Activated naive CD4-positive, alpha-beta T cell treated with anti-CD3 and anti-CD28 coated beads, Interleukin-2, amount 10 ng/mL, durations not matched to agents 7 days and 5 days (primary cell): ENCODE measurements at regions of chr6 and their contacts with region 1.

Region 1: GRCh38 chr6:137866914-137867684 is at the start of gene TNFAIP3:
- DNase-seq: peak; percentile 95
- H3K4me3 Mint-ChIP-seq: peak within 1 kb of the TSS; percentile 93
- H3K27ac Mint-ChIP-seq: peak within 1 kb of the TSS; percentile 96
- H3K4me1 Mint-ChIP-seq: peaks cover 55% of the 10 kb centered on the region
- H3K27me3 Mint-ChIP-seq: no peaks in the 10 kb centered on the region

Region 2: DNA sequence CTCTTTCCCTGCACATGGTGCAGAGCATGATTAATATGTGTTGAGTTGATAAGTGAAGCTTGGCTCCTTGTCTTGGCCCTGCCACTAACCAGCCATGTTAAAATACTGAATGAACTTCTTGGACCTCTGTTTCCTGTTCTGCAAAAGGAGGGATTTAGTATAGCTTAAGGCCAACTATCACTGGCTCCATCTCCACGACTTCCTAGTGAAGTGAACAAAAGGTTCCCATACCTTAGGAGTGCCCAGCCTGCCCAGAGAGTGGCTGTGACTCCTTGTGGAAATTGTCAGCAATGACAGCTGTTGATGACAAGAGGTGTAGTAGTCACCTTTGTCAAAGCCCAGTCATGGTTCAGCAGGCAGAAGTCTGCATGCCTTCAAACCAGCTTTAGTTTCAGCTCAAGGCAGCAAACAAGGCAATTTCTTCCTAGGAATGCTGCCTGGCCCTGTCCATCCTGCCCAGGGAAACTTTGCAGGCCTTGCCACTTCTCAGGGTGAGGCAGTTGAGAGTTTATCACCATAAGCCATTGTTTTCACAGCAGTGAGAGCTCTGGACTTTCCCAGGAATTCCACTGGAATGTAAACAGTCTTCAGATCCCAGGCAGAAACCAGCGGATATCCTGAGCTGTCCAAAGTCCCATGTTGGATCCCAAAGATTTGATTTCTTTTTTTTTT is 169.7 kb before region 1 on chr6:
- CTCF ChIA-PET with region 1: interaction called, 10 read pairs
- DNase-seq: no peak
- H3K4me3 Mint-ChIP-seq: no peak overlapping the region
- H3K27ac Mint-ChIP-seq: no peak overlapping the region
- H3K4me1 Mint-ChIP-seq: peaks cover 39% of the 10 kb centered on the region
- H3K27me3 Mint-ChIP-seq: peaks cover 15% of the 10 kb centered on the region

Region 3: DNA sequence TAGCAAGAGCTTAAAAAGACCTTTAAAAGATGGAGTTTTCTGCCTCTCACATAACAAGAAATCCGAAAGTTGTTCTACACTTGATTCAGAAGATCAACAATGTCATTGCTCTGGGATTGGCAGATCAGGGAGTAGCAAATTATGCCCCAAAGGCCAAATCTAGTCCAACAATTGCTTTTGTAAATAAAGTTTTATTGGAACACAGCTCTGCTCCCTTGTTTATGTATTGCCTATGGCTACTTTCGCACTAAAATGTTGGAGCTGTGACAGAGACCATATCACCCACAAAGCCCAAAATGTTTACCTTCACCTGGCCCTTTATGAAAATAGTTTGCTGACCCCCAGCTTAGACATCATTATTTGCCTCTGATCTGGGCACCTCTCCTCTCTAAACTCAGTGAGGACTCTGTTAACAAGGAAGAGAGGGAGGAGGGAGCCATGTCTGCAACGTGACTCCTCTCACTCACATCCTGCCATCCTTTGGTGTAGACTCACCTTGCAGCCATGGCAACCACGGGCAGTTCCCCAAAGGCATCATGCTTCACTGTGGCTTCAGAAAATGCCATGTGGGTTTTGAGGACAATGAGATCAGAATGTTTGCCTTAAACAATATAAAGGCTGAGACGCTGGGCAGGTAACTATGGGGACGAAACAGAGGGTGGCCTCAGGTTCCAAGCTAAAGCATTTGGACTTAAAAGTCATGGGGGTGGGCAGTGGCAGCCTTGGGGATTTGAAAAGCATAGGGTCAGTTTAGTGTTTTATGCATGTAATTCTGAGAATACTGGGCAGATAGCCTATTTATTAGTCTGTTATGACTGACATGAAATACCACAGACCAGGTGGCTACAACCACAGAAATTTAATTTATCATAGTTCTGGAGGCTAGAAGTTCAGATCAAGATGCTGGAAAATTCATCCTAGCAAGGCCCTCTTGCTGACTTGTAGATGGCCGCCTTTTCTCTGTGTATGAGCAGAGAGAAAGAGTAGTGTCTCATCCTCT is 149.7 kb before region 1 on chr6:
- CTCF ChIA-PET with region 1: interaction called, 71 read pairs
- DNase-seq: peak; percentile 84
- H3K4me3 Mint-ChIP-seq: no peak overlapping the region
- H3K27ac Mint-ChIP-seq: peak overlapping the region; percentile 78
- H3K4me1 Mint-ChIP-seq: peaks cover 55% of the 10 kb centered on the region
- H3K27me3 Mint-ChIP-seq: no peaks in the 10 kb centered on the region

Region 4: DNA sequence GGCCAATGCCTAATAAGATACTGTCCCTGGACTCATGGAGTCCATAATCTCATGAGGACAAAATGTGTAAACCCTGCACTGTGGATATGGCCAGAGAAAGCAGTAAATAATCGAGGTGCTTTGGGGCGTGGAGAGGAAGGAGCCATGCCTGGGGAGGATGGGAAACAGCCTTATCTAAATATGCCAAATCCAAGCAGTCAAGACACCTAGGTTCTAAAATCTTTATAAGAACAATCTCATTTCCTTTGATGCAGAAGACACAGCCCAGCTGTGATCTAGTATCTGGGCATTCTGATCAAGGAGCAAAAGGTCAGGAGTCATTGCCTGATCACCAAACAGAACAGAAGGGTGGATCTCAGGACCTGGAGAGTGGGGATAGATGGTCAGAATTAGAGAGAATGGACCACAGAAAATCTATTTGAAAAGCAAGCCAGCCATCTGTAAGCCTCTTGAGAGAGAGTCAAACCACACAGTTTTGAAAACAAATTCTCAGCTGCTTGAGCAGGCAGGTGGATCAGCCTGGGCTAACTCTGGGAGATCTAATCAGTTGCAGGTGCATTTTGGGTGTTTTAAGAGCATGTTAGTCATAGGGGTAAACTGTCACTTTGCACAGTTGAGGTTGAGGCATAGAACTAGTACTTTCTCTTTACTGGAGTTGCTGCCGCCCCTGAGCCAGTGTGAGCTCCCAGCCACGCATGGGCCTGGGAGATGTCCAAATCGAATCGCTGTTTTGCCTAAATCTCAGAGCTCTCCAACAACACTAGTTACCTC is 130.9 kb before region 1 on chr6:
- CTCF ChIA-PET with region 1: no interaction called
- DNase-seq: peak; percentile 29
- H3K4me3 Mint-ChIP-seq: no peak overlapping the region
- H3K27ac Mint-ChIP-seq: peak overlapping the region; percentile 71
- H3K4me1 Mint-ChIP-seq: peaks cover 13% of the 10 kb centered on the region
- H3K27me3 Mint-ChIP-seq: peaks cover 39% of the 10 kb centered on the region

Region 5: DNA sequence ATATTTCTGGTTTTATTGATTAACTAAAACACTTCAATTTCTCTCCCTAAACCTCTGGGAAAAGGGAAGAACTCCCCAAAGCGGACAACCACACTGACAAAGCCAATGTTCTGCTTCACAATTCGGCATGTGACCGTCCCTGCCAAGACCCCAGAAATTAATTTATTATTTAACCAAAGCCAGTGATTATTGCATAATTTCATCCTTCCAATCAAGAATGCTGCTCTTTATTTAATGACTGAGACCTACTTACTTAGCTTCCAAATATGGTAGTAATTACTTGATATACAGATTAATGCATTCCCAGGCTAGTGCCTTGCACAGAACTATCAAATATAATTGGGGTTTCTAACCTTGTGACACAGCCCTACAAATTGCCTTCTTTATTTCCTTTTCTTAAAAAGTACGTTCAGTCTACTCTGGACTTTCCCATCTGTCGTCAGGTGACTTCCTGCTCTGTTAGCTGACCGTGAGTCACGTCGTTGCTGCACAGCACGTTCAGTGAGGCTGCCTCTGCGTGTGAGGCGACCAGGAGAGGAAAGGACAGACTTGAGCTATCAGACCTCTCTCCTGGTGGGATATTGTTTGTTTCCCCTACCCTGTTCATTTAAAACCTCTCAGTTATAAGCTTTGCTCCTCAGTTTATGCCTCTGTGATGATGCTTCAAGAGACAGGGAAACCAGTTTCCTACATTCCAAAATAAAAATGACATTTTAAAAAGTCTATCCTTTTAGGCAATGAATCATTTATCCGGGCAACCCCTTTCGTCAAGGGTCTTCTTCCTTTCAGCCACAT is 55.8 kb before region 1 on chr6:
- CTCF ChIA-PET with region 1: interaction called, 11 read pairs
- DNase-seq: peak; percentile 78
- H3K4me3 Mint-ChIP-seq: peak overlapping the region; percentile 14
- H3K27ac Mint-ChIP-seq: peak overlapping the region; percentile 61
- H3K4me1 Mint-ChIP-seq: peaks cover 40% of the 10 kb centered on the region
- H3K27me3 Mint-ChIP-seq: no peaks in the 10 kb centered on the region

Region 6: GRCh38 chr6:137878486-137879285 is 11.6 kb after region 1 on chr6:
- CTCF ChIA-PET with region 1: interaction called, 87 read pairs
- DNase-seq: no peak
- H3K4me3 Mint-ChIP-seq: no peak overlapping the region
- H3K27ac Mint-ChIP-seq: no peak overlapping the region
- H3K4me1 Mint-ChIP-seq: peaks cover 55% of the 10 kb centered on the region
- H3K27me3 Mint-ChIP-seq: no peaks in the 10 kb centered on the region

Region 7: GRCh38 chr6:137975188-137975940 is 108.3 kb after region 1 on chr6:
- CTCF ChIA-PET with region 1: interaction called, 41 read pairs
- DNase-seq: peak; percentile 29
- H3K4me3 Mint-ChIP-seq: peak overlapping the region; percentile 67
- H3K27ac Mint-ChIP-seq: peak overlapping the region; percentile 95
- H3K4me1 Mint-ChIP-seq: peaks cover 40% of the 10 kb centered on the region
- H3K27me3 Mint-ChIP-seq: no peaks in the 10 kb centered on the region

Region 8: GRCh38 chr6:138088330-138088766 is 221.2 kb after region 1 on chr6:
- CTCF ChIA-PET with region 1: no interaction called
- DNase-seq: no peak
- H3K4me3 Mint-ChIP-seq: no peak overlapping the region
- H3K27ac Mint-ChIP-seq: no peak overlapping the region
- H3K4me1 Mint-ChIP-seq: no peaks in the 10 kb centered on the region
- H3K27me3 Mint-ChIP-seq: peaks cover 10% of the 10 kb centered on the region